PC-9 (cell line): ENCODE measurements at regions of chr3 and their contacts with region 1.

Region 1: GRCh38 chr3:72629191-72629631 is 219.0 kb downstream of the SHQ1 start:
- DNase-seq: peak in 1 of 2 experiments; percentile 76
- H3K4me3 ChIP-seq: no peak overlapping the region
- H3K27ac ChIP-seq: peak overlapping the region; percentile 93
- H3K4me1 ChIP-seq: peaks cover 61% of the 10 kb centered on the region
- H3K27me3 ChIP-seq: no peaks in the 10 kb centered on the region
- CTCF ChIP-seq: no peak

Region 2: GRCh38 chr3:72339116-72340030 is 289.8 kb before region 1 on chr3:
- CTCF ChIA-PET with region 1: no interaction called
- POLR2A ChIA-PET with region 1: no interaction called
- intact Hi-C with region 1: loop called (anchors 1 kb)
- DNase-seq: peak; percentile 68 to 93
- H3K4me3 ChIP-seq: no peak overlapping the region
- H3K27ac ChIP-seq: peak overlapping the region; percentile 84
- H3K4me1 ChIP-seq: peaks cover 14% of the 10 kb centered on the region
- H3K27me3 ChIP-seq: no peaks in the 10 kb centered on the region
- CTCF ChIP-seq: no peak

Region 3: DNA sequence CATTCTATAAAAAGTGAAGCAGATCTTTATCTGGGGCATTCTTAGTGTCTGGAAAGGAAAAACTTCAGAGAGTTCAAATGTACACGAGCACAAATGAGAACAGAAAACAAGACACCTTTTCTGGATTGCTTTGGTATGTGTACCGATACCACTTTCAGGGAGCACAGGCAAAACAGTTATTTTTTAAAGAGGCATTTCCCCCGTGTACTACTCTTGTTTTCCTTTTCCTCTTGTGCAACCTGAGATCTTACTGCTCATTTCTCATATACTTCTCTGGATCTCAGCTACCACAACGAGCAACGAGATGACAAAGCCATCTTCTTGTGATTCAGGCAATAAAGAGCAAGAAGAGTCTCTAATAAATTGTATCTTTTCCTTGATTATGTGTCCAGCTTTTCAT is 244.6 kb before region 1 on chr3:
- CTCF ChIA-PET with region 1: no interaction called
- POLR2A ChIA-PET with region 1: no interaction called
- intact Hi-C with region 1: no loop called
- DNase-seq: no peak
- H3K4me3 ChIP-seq: no peak overlapping the region
- H3K27ac ChIP-seq: no peak overlapping the region
- H3K4me1 ChIP-seq: no peaks in the 10 kb centered on the region
- H3K27me3 ChIP-seq: no peaks in the 10 kb centered on the region
- CTCF ChIP-seq: no peak

Region 4: DNA sequence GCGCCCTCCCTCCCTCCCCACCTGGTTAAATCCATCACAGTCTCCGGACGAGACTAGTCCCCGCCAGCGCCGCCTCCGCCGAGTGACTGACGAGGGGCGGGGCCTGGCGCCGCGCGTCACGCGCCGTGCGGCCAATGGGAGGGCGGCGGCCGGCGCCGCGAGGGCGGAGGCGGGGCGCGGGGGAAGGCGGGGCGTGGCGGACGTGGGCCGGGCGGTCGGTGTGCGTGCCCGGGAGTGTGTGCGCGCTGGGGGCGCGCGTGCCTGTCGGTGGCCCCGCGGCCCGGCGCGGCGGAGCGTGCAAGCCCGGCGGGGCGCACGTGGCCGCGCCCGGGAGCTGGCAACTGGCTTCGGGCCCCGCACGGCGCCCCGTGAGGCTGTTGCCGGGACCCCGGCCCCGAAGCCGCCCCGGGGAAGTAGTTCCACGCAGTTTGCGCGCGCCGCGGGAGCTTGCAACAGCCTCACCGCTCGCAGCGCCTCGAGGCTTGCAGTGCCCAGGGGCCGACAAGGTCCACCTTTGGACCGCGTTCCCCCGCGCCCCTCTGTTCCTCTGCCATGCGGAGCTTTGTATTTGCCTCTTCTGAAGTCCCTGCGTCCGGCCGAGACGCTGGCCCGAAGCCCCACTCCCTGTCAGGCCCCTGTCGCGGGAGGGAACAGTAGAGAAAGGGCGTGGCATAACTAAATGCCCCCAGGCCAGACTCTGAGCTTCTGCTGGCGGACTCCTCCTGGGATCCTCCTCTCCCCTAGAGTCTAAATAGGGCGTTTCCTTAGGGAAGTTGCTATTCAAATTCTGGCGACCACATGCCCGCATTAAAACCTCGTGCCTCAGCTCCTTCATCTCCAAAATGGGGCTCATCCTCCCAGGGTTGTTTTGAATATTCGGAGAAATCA is 181.9 kb before region 1 on chr3:
- CTCF ChIA-PET with region 1: interaction called, 4 read pairs
- POLR2A ChIA-PET with region 1: no interaction called
- intact Hi-C with region 1: loop called (anchors 2 kb)
- DNase-seq: peak; percentile 50 to 93
- H3K4me3 ChIP-seq: peak overlapping the region; percentile 66
- H3K27ac ChIP-seq: peak overlapping the region; percentile 61; the same call in 1 of the 2 replicates
- H3K4me1 ChIP-seq: peaks cover 23% of the 10 kb centered on the region
- H3K27me3 ChIP-seq: no peaks in the 10 kb centered on the region
- CTCF ChIP-seq: no peak

Region 5: DNA sequence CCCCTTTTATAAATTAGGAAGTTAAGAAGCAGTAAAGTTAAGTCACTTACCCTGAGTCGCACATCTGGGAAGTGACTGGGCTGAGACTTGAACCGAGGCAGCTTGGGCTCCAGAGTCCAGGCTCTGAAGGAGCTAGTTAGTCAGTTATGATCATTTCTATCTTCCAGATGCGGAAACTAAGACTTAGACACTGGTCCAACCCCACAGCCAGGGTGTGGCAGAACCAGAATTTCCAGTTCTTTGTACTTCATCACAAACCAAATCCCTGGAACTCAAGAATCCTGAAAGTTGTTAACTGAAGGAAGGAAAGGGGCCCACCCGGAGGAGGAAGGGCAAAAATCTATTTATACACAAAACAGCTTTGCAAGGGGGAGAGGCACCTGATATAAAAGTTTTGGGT is 170.9 kb before region 1 on chr3:
- CTCF ChIA-PET with region 1: no interaction called
- POLR2A ChIA-PET with region 1: no interaction called
- intact Hi-C with region 1: loop called (anchors 1 kb)
- DNase-seq: peak; percentile 39 to 70
- H3K4me3 ChIP-seq: no peak overlapping the region
- H3K27ac ChIP-seq: no peak overlapping the region
- H3K4me1 ChIP-seq: peaks cover 13% of the 10 kb centered on the region
- H3K27me3 ChIP-seq: no peaks in the 10 kb centered on the region
- CTCF ChIP-seq: no peak

Region 6: DNA sequence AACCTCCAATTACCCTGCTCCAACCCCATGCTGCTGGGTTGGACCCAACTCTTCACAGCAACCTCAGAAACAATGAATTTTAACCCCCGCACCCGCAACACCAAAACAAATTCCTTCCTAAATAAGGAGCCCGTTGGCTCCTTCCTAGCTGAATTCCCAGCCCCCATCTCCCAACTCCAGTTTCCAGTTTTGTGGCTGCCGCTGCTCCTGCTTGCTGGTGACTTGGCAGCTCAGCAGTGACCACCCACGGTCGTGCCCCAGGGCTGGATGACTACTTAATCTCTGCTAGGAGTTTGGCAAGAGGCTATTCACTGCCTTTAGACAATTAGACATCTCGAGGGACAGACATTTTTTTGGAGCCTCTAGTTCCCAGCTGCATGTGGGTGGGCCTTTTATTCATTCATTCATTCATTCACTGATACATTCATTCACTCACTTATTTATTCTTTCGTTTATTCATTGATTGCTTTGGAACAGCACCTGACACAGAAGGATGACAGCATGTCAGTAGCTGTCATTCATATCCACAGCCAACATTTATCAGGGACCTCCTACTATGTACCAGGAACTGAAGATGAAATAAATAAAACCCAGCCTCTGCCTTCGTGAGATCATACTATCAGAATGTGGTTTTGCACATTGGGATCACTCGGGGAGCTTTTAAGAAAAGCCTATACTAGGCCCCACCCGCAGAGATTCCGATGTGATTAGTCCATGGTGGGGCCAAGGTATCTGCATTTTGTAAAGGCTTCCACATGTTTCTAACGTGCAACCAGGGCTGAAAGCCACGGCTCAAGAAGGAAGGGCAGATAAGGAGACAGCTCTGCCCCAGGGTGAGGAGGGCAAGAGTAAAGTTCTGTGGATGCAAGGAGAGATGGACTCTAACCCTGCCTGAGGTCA is 37.4 kb before region 1 on chr3:
- CTCF ChIA-PET with region 1: no interaction called
- POLR2A ChIA-PET with region 1: no interaction called
- intact Hi-C with region 1: loop called (anchors 5 kb)
- DNase-seq: peak; percentile 81 to 82
- H3K4me3 ChIP-seq: no peak overlapping the region
- H3K27ac ChIP-seq: peak overlapping the region; percentile 74
- H3K4me1 ChIP-seq: peaks cover 18% of the 10 kb centered on the region
- H3K27me3 ChIP-seq: no peaks in the 10 kb centered on the region
- CTCF ChIP-seq: no peak

Region 7: DNA sequence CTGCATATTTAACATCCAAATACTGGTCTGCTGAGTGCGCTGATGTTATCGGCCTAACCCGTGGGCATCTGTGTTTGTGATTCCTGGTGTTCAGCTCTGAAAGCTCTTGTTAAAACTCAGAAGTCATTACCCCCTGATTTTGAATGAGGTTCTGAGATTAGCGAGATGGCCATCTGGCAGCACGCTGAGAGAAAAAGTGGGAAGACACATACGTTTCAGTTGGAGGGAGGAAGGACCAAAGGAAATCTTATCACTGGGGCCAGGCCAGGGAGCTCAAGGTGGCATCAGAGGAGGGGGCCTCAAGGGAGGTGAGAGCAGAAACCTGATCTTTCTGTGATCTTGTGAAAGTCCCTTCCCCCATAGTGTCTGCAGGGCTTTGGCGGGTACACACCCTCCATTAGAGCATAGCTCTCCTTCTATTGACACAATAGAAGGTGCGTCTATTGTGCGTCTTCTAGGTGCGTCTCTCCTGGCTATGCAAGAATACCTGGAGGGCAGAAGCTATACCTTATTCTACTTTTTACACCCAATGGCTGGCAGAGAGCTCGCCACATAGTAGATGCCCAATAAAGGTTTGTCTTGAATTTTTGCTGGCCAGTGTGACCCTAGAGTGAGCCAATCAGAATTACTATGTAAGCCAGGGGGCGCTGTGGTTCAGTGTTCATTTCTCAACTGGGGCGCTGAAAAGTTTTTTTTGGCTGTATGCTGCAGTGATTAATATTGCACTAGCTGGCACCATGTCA is 36.7 kb after region 1 on chr3:
- CTCF ChIA-PET with region 1: interaction called, 4 read pairs
- POLR2A ChIA-PET with region 1: interaction called, 4 read pairs
- intact Hi-C with region 1: loop called (anchors 1 kb)
- DNase-seq: peak in 1 of 2 experiments; percentile 44
- H3K4me3 ChIP-seq: no peak overlapping the region
- H3K27ac ChIP-seq: no peak overlapping the region
- H3K4me1 ChIP-seq: peaks cover under 1% of the 10 kb centered on the region
- H3K27me3 ChIP-seq: no peaks in the 10 kb centered on the region
- CTCF ChIP-seq: peak; percentile 66

Region 8: DNA sequence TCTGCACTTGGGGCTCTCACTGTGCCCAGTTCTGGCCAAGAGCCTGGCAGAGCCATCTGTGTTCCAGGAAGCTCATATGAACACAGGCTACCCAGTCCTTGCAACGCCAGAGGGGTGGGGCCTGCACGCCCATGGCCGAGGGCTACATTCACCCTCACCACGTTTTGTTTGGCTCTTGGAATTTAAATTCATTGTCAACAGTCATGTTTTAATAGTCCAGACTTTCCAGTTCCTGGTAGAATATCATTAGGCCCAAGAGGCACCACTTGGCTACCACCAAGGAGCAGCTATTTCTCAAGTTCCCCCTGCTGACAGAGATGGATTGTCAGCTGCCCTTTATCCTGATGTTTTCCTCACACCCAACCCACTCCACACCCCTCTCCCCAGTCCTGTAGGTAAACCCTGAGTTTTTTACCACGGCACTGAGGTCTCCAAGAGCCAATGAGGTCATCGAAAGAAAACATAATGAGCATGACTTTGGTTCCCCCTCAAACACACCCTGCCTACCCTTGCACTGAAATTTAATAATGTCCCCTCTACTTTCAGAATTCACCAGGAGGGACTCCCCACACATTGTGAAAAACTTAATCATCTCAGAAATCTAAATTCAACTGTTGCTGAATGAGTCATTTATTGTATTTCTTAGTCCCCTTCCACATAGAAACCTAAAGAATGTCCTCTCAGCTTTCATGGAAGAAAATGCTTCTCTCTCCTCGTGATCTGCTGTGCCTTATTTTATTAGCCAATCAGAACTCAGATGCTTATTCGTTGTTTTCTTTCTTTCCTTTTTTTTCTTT is 93.9 kb after region 1 on chr3:
- CTCF ChIA-PET with region 1: no interaction called
- POLR2A ChIA-PET with region 1: no interaction called
- intact Hi-C with region 1: loop called (anchors 1 kb)
- DNase-seq: peak; percentile 89 to 93
- H3K4me3 ChIP-seq: no peak overlapping the region; the same call in 1 of the 2 replicates
- H3K27ac ChIP-seq: peak overlapping the region; percentile 97
- H3K4me1 ChIP-seq: peaks cover 41% of the 10 kb centered on the region
- H3K27me3 ChIP-seq: no peaks in the 10 kb centered on the region
- CTCF ChIP-seq: no peak